ENCODE measurements at regions of chr4 and their contacts with region 1.

Region 1: DNA sequence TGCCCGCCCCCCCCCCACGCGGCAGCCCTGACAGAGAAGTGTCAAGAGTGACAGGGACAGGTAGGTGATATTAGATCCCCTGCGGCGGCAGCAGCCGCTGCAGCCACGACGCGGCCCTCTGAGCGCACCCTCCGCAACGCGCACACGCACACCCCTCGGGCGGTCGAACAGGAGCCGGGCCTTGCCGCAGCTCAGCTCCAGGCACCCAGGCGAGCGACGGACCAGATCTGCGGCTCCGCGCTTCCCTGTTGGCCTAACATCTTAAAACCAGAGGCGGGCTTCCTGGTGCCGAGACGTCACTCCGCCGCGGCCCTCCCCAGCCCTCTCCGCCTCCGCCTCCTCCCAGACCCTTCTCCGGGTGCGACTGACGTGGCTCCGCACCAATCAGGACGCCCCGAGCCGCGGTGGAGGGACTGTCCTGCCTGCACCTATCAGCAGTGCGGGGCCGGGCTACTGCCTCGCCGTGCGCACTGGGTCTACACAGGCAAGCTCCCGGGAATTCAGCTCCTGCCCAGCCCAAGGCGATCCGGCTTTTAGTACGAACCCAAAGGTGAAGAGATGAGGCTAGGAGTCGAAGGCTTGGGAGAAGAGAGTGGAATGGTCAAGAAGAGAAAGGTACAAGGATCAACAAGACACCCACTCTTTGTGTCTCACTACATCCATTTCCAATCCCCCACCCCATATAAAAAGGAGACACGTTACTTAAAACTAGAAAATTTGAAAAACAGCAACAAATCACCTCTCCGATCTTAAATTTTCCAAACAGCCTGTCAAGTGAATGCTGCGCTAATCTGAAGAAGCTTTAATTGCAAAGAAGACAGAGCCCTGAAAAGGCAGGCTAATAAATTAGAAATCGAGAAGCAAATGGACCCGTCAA is at the start of gene PITX2:
- DNase-seq: peak; percentile 89
- H3K4me3 ChIP-seq: peak within 1 kb of the TSS; percentile 19 to 50 (median 33)
- H3K27ac ChIP-seq: no peak within 1 kb of the TSS
- H3K4me1 ChIP-seq: peaks cover 8% of the 10 kb centered on the region
- H3K27me3 ChIP-seq: peaks cover 93 to 100% of the 10 kb centered on the region in 2 experiments
- CTCF ChIP-seq: no peak
- POLR2A ChIP-seq: no peak
- total RNA-seq, gene PITX2: 0.31 and 0.35 TPM in 2 replicates

Region 2: GRCh38 chr4:110472583-110473329 is 150.3 kb before region 1 on chr4:
- CTCF ChIA-PET with region 1: no interaction called
- POLR2A ChIA-PET with region 1: no interaction called
- dilution Hi-C with region 1: no loop called
- intact Hi-C with region 1: no loop called
- DNase-seq: no peak
- H3K4me3 ChIP-seq: no peak overlapping the region
- H3K27ac ChIP-seq: no peak overlapping the region
- H3K4me1 ChIP-seq: no peaks in the 10 kb centered on the region
- H3K27me3 ChIP-seq: no peaks in the 10 kb centered on the region
- CTCF ChIP-seq: no peak
- POLR2A ChIP-seq: no peak

Region 3: GRCh38 chr4:110533940-110534339 is 89.1 kb before region 1 on chr4:
- CTCF ChIA-PET with region 1: interaction called, 3 read pairs
- POLR2A ChIA-PET with region 1: no interaction called
- dilution Hi-C with region 1: no loop called
- intact Hi-C with region 1: loop called (anchors 2 kb)
- DNase-seq: peak; percentile 94
- H3K4me3 ChIP-seq: peak overlapping the region in 1 of 3 experiments; percentile 54
- H3K27ac ChIP-seq: peak overlapping the region; percentile 94
- H3K4me1 ChIP-seq: peaks cover 38% of the 10 kb centered on the region
- H3K27me3 ChIP-seq: no peaks in the 10 kb centered on the region
- CTCF ChIP-seq: no peak
- POLR2A ChIP-seq: no peak

Region 4: DNA sequence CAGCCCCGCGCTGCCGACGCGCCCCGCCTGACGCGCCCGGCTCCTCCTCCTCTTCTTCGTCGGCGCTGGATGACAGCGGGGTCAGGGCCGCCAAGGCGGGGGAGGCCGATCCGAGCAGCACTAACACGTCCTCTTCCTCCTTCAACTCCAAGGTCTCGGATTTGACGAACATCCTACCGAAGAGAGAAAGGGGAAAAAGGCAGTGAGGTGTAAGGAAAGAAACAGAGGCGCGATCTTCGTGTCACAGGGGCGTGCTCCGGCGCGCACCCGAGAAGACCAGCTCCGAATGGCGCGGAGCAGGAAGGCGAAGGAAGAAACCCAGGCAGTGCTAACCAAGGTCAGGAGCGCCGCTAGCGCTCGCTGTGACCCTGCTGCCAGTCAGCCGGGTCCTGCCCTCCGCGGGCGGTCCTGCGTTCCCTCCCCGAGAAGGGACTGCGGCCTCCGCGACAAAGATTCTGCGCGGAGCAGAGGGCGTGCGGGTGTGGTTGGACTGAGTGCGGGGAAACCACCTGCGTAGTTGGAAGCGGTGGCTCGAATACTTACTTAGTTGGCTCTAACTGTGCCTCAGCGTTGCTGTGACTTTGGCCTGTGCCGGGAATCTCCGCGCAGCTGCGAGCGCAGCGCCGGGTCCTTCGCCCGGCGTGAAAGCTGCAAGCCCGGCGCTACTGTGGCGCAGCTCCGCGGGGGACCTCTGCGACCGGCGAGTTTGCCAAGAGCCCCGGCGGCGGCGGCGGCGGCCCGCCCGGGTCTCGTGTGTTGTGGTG is 1892.4 kb after region 1 on chr4:
- CTCF ChIA-PET with region 1: no interaction called
- POLR2A ChIA-PET with region 1: no interaction called
- dilution Hi-C with region 1: no loop called
- intact Hi-C with region 1: loop called (anchors 5 kb)
- DNase-seq: peak; percentile 40
- H3K4me3 ChIP-seq: peak overlapping the region in 2 of 3 experiments; percentile 29 to 33
- H3K27ac ChIP-seq: no peak overlapping the region
- H3K4me1 ChIP-seq: peaks cover 8% of the 10 kb centered on the region
- H3K27me3 ChIP-seq: peaks cover 80 to 97% of the 10 kb centered on the region in 2 experiments
- CTCF ChIP-seq: no peak
- POLR2A ChIP-seq: no peak